ENCODE measurements at regions of chr17 and their contacts with region 1.

Region 1: GRCh38 chr17:74457146-74457819 is 9.2 kb upstream of the CD300A start:
- DNase-seq: peak; percentile 51 to 91 (median 81)
- ATAC-seq: peak in 3 of 4 donors; percentile 29 to 47 (median 31)
- H3K4me3 ChIP-seq: no peak overlapping the region
- H3K27ac ChIP-seq: no peak overlapping the region
- H3K4me1 ChIP-seq: peaks cover 13 to 25% (median 17%) of the 10 kb centered on the region in 3 donors
- H3K27me3 ChIP-seq: no peaks in the 10 kb centered on the region
- CTCF ChIP-seq: peak; percentile 83 to 92 (median 88)

Region 2: GRCh38 chr17:73901661-73902415 is 555.4 kb before region 1 on chr17:
- intact Hi-C with region 1: no loop called
- DNase-seq: peak; percentile 26 to 78 (median 42)
- ATAC-seq: peak; percentile 64 to 92 (median 90)
- H3K4me3 ChIP-seq: peak overlapping the region in 2 of 4 donors; percentile 16 to 44
- H3K27ac ChIP-seq: no peak overlapping the region
- H3K4me1 ChIP-seq: no peaks in the 10 kb centered on the region
- H3K27me3 ChIP-seq: peaks cover 0 to 10% (median 0%) of the 10 kb centered on the region in 4 donors
- CTCF ChIP-seq: no peak

Region 3: DNA sequence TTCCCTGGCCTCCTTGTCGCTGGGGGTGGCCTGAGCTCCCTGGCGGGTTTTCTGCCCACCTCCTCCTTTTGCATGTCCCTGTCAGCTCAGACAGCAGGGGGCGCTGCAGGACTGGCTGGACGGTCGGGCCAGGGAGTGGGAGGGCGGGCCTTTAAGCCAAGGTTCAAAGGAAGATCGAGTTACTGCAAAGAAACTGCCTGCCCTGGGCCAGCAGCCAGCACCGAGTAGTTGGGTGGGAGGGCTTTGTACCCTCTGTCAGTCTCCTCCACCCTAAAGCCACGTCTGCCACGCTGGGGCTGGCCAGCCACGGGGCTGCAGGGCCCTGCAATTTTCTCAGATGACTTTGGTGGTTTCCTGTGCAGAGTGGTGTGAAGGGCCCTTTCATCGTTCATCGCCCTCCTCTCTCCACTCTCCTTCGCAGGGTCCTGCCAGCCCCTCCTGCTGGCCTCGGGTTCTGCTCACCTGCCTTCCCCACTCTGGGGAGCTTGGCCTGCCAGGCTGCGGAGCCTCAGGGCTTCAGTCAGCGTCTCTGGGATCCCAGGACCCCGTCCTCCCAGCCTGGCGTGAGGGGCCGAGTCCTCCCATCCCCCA is 77.7 kb before region 1 on chr17:
- intact Hi-C with region 1: loop called in 2 of 3 experiments (anchors 2 kb)
- DNase-seq: peak; percentile 85 to 100 (median 94)
- ATAC-seq: peak; percentile 90 to 96 (median 94)
- H3K4me3 ChIP-seq: no peak overlapping the region
- H3K27ac ChIP-seq: no peak overlapping the region
- H3K4me1 ChIP-seq: peaks cover 9 to 12% (median 9%) of the 10 kb centered on the region in 3 donors
- H3K27me3 ChIP-seq: no peaks in the 10 kb centered on the region
- CTCF ChIP-seq: peak; percentile 85 to 94 (median 92)